Activated naive CD8-positive, alpha-beta T cell treated with anti-CD3 and anti-CD28 coated beads, Interleukin-2, amount 10 ng/mL, durations not matched to agents 7 days and 5 days (primary cell): ENCODE measurements at regions of chr2 and their contacts with region 1.

Region 1: DNA sequence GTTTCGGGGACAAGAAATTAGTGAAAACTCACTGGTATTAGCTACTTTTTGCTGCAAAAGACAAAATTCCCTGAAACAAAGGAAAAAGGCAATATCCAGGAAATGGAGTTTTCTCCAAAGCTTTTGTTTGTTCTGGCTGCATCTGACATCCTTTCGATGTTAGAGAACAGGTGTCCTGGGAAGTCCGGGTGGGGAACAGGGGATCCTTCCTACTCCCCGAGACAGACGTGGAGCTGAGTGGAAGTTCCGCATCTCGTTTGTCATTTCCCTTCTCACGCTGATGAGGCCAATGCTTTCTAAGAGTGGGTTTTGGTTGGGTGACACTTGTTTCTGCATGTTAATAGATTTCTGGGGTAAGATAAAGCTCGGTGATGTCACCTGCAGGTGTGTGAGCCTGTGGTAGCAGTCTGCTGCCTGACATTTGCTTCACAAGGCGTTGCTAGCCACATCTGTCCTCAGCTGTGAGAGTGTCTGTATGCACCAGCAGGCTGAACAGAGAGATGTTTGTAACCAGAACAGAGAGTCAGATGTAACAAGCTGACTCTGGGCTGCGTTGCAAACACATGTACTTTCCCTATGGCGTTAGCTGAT is 125.9 kb downstream of the ACOXL start:
- DNase-seq: no peak
- ATAC-seq: peak; percentile 97
- H3K4me3 Mint-ChIP-seq: peak overlapping the region; percentile 74
- H3K27ac Mint-ChIP-seq: peak overlapping the region; percentile 67
- H3K4me1 Mint-ChIP-seq: peaks cover 52% of the 10 kb centered on the region
- H3K27me3 Mint-ChIP-seq: peaks cover 10% of the 10 kb centered on the region

Region 2: GRCh38 chr2:110876243-110876999 is 18.2 kb after region 1 on chr2:
- POLR2A ChIA-PET with region 1: interaction called, 19 read pairs
- DNase-seq: no peak
- ATAC-seq: no peak
- H3K4me3 Mint-ChIP-seq: peak overlapping the region; percentile 70
- H3K27ac Mint-ChIP-seq: peak overlapping the region; percentile 84
- H3K4me1 Mint-ChIP-seq: peaks cover 32% of the 10 kb centered on the region
- H3K27me3 Mint-ChIP-seq: peaks cover 3% of the 10 kb centered on the region